Activated T-helper 1 cell treated with anti-CD3 and anti-CD28 coated beads, Interleukin-12 subunit alpha, Interleukin-12 subunit beta, Interleukin-2, Interleukin-4 antibody, amounts not matched to agents 30 ng/mL and 10 ng/mL and 1 ng/mL, durations not matched to agents 14 hours and 24 hours and 36 hours (primary cell): ENCODE measurements at regions of chrX and their contacts with region 1.

Region 1: DNA sequence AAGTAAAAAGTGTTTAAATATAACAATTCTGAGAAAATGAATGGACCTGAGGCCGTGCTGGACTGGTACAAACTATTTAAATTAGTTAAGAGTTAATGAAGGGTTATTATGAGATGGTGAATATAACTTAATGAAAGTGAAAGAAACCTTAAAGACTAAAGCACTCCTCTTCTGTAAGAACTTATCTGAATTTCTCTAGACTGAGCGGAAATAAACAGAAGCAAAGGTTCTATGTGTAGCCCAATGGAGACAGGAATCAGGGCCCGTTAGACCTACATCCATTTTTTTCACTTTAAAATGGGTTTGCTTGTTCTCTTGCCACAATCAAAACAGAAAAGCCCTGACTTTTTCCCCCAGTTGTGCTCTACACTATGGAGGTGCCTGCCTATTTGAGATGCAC is 14.9 kb downstream of the AMMECR1 start:
- DNase-seq: no peak
- H3K4me3 Mint-ChIP-seq: no peak overlapping the region
- H3K27ac Mint-ChIP-seq: no peak overlapping the region
- H3K4me1 Mint-ChIP-seq: peaks cover 14% of the 10 kb centered on the region
- H3K27me3 Mint-ChIP-seq: no peaks in the 10 kb centered on the region

Region 2: DNA sequence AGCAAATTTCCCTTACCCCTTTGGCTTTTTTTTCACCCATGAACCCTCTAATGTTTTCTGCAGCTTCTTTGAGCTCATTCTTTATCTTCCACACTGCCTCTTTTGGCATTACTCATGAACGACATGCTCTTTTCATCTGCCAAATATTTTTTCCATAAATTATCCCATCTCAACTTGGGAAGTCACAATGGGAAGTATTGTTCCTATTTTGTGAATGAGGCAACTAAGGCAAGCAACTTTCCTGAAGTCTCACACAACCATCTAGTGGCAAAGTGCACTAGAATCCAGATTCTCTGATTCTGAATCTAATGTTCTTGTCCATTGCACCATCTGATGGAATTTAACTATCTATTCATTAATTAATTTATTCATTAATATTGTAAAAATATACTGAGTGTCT is 56.3 kb after region 1 on chrX:
- intact Hi-C with region 1: loop called (anchors 1 kb)
- DNase-seq: no peak
- H3K4me3 Mint-ChIP-seq: no peak overlapping the region
- H3K27ac Mint-ChIP-seq: no peak overlapping the region
- H3K4me1 Mint-ChIP-seq: no peaks in the 10 kb centered on the region
- H3K27me3 Mint-ChIP-seq: peaks cover 6% of the 10 kb centered on the region

Region 3: DNA sequence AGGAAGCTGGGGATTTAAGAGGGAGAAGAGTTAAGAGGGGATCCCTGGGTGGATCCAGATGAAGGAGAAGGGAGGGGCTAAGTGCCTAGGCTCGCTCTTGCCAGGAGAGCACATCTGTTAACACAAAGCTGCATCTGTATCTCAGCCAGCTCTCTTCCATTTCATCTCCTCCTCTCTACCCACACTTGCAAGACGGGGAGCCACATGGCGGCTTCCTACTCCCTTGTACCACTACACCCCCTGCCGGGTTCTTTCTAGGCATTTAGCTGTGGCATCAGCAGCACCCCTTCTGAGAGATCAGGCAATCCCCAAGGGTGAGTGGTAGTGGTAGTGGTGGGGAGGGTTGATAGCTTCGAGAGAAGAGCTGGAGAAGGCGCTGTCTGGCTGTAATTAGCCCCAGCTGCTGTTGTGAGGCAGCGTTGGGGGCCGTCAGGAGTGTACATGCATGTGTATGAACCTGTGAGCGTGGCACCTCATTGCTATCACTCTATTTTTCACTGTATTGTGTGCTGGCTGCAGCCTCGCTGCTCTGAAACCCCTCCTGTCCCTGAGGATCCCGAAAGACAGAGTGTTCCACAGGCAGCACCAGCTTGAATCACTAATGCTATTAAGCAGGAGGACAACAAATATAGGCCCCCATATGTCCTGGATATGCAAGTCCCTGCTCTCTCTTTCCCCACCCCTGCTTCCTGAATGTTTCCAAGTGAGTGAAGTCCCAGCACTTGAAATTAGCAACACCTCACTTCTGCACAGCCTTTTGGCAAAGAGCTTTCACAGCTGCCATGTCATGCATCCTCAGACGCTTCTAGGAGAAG is 129.3 kb after region 1 on chrX:
- intact Hi-C with region 1: no loop called
- DNase-seq: no peak
- H3K4me3 Mint-ChIP-seq: no peak overlapping the region
- H3K27ac Mint-ChIP-seq: no peak overlapping the region
- H3K4me1 Mint-ChIP-seq: no peaks in the 10 kb centered on the region
- H3K27me3 Mint-ChIP-seq: peaks cover 2% of the 10 kb centered on the region